ENCODE measurements at regions of chr10 and their contacts with region 1.

Region 1: GRCh38 chr10:47207281-47207615 is 92.7 kb upstream of the GDF10 start:
- DNase-seq: peak; percentile 33
- H3K4me3 Mint-ChIP-seq: peak overlapping the region; percentile 31
- H3K27ac Mint-ChIP-seq: peak overlapping the region; percentile 71
- H3K4me1 Mint-ChIP-seq: peaks cover 64% of the 10 kb centered on the region
- H3K27me3 Mint-ChIP-seq: no peaks in the 10 kb centered on the region

Region 2: DNA sequence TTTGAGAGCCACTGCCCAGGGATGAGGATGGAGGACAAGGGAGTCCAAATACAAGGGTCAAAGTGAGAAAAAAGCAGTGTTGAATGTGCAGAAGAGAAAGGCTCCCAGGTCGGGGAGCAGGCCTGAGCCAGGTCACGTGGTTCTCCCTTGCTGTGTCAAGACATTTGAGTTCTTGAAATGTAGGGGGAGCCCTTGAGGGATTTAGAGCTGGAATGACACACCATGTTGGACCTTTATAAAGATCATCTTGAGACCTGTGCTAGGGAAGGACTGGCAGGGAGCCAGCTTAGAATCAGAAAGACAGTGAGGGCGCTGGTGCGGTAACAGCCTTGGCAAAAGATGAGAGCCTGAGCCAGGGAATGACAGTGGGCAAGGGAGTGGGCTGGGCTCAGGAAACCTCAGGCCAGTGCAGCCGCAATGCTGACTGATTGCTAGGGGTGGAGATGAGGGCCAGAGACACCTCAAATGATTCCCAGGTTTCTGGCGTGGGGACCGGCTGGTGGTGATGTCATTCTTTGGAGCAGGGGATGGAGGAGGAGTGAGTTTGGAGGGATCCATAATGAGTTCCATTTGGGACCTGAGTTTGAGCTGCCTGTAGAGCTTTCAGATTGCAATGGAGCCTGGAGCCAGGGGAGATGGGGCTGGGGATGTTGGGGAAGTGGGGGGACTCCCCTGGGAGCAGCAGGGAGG is 175.9 kb before region 1 on chr10:
- CTCF ChIA-PET with region 1: no interaction called
- POLR2A ChIA-PET with region 1: no interaction called
- intact Hi-C with region 1: no loop called
- DNase-seq: peak; percentile 8
- H3K4me3 Mint-ChIP-seq: no peak overlapping the region
- H3K27ac Mint-ChIP-seq: no peak overlapping the region
- H3K4me1 Mint-ChIP-seq: no peaks in the 10 kb centered on the region
- H3K27me3 Mint-ChIP-seq: no peaks in the 10 kb centered on the region

Region 3: DNA sequence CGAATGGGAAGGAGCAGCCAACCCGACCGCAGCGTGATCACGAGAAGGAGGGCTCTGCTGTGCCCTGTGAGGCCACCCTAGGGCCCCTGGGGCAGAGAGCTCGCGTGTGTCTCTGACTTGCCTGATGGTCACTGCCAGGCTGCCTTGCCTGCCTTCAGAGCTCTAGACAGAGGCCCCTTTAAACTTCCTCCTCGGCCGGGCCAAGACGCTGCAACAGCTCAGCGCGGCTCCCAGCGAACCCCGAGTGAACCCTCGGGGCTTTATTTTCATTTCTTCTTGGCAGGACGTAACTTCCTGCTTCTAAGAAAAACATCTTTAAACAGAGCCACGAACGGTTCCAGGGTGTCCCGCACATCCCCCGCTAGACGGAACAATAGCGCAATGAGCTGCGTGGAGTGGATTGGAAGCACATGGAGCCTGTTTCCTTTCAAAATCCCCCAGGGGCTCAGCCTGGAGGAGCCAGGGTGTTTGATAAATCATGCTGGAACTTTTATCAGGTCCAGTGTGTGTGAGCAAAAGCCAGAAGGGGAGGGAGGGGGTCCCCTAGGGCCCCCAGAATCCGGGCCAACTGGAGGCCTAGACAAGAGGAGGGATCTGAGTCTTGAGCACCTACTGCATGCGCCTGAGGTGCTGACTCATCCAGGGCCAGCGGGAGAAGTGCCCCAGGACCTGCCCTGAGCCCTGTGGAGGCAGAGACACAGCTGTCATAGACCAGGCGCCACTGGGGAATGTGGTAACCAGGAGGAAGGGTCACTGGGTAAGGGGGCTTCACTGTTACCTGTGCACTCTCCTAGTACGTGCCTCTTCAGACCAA is 41.3 kb before region 1 on chr10:
- CTCF ChIA-PET with region 1: no interaction called
- POLR2A ChIA-PET with region 1: no interaction called
- intact Hi-C with region 1: loop called (anchors 5 kb)
- DNase-seq: peak; percentile 58
- H3K4me3 Mint-ChIP-seq: peak overlapping the region; percentile 67
- H3K27ac Mint-ChIP-seq: peak overlapping the region; percentile 78
- H3K4me1 Mint-ChIP-seq: peaks cover 27% of the 10 kb centered on the region
- H3K27me3 Mint-ChIP-seq: no peaks in the 10 kb centered on the region

Region 4: DNA sequence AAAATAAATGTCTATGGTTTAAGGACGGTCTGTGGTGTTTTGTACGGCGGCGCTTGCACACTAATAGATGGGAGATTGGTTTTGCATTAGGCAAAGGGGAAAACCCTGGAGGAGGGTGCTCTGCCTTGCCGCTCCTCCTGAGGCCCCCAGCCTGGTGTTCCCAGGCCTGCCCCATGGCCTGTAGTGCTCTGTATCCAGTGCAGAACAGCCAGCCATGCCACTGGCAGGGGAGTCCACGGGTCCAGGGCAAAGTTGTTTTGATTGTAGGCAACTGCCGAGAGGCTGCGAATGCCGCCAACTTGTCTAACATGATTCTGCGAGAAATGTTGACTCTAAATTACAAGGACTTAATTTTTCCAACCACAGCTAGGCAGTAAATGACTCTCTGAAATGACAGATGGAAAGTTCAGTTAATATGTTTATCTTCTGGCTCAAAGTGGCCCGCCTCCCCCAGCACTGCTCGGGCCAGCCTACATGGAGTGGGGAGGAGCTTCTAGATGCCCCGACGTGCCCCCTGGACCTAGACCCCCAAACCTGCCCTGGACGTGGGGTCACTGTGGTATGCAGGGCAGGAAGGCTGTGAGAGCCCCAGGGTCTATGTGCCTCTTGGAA is 11.9 kb before region 1 on chr10:
- CTCF ChIA-PET with region 1: interaction called, 3 read pairs
- POLR2A ChIA-PET with region 1: interaction called, 3 read pairs
- intact Hi-C with region 1: loop called (anchors 1 kb)
- DNase-seq: peak; percentile 63
- H3K4me3 Mint-ChIP-seq: peak overlapping the region; percentile 10
- H3K27ac Mint-ChIP-seq: peak overlapping the region; percentile 76
- H3K4me1 Mint-ChIP-seq: peaks cover 14% of the 10 kb centered on the region
- H3K27me3 Mint-ChIP-seq: no peaks in the 10 kb centered on the region

Region 5: DNA sequence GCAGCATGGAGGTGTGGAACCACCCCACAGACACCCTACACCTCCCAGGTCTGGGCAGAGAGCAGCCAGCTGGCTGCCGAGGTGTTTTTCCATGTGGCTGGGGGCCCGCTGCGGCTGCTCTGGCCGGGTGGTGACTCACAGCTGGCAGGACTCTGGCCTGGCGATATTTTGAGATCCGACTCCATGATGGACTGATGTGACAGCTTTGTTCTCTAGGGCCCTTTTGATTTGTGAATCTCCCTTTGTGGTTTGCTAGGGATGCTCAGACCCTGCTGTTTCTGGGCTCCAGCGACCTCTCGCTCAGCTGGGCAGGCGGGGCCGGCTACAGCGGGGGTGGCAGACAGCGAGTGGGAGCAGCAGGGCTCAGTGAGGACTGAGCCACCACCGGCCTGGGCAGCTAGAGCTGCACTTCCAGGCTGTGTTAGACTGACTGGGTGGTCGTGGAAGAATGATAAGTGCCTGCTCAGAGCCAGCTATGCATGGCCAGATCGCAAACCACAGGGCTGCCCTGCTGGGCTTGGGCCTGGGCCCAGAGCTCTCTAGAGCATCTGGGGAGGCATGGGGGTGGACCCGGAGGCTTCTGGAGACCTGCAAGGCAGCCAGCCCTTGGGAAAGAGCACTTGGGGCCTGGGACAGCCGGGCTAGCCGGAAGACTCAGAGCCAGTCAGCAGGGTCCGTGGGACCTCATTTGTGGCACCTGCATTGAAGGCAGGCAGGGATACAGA is 46.6 kb after region 1 on chr10:
- CTCF ChIA-PET with region 1: no interaction called
- POLR2A ChIA-PET with region 1: no interaction called
- intact Hi-C with region 1: no loop called
- DNase-seq: no peak
- H3K4me3 Mint-ChIP-seq: no peak overlapping the region
- H3K27ac Mint-ChIP-seq: no peak overlapping the region
- H3K4me1 Mint-ChIP-seq: peaks cover 42% of the 10 kb centered on the region
- H3K27me3 Mint-ChIP-seq: no peaks in the 10 kb centered on the region